Activated CD4-positive, alpha-beta T cell treated with anti-CD3 and anti-CD28 coated beads for 36 hours (primary cell): ENCODE measurements at regions of chr13 and their contacts with region 1.

Region 1: GRCh38 chr13:106548064-106548696 is 12.7 kb upstream of the EFNB2 start:
- DNase-seq: no peak
- ATAC-seq: no peak
- H3K4me3 Mint-ChIP-seq: no peak overlapping the region
- H3K27ac Mint-ChIP-seq: no peak overlapping the region
- H3K4me1 Mint-ChIP-seq: peaks cover 14% of the 10 kb centered on the region
- H3K27me3 Mint-ChIP-seq: no peaks in the 10 kb centered on the region

Region 2: GRCh38 chr13:105139380-105140285 is 1408.5 kb before region 1 on chr13:
- CTCF ChIA-PET with region 1: no interaction called
- POLR2A ChIA-PET with region 1: interaction called, 3 read pairs
- intact Hi-C with region 1: loop called in 1 of 2 experiments (anchors 5 kb)
- DNase-seq: peak; percentile 75
- ATAC-seq: peak; percentile 91
- H3K4me3 Mint-ChIP-seq: peak overlapping the region; percentile 73
- H3K27ac Mint-ChIP-seq: peak overlapping the region; percentile 93
- H3K4me1 Mint-ChIP-seq: peaks cover 17% of the 10 kb centered on the region
- H3K27me3 Mint-ChIP-seq: no peaks in the 10 kb centered on the region

Region 3: GRCh38 chr13:106373989-106374572 is 174.1 kb before region 1 on chr13:
- CTCF ChIA-PET with region 1: no interaction called
- POLR2A ChIA-PET with region 1: no interaction called
- intact Hi-C with region 1: no loop called
- DNase-seq: peak; percentile 38
- ATAC-seq: peak; percentile 82
- H3K4me3 Mint-ChIP-seq: no peak overlapping the region
- H3K27ac Mint-ChIP-seq: no peak overlapping the region
- H3K4me1 Mint-ChIP-seq: no peaks in the 10 kb centered on the region
- H3K27me3 Mint-ChIP-seq: peaks cover 13% of the 10 kb centered on the region

Region 4: DNA sequence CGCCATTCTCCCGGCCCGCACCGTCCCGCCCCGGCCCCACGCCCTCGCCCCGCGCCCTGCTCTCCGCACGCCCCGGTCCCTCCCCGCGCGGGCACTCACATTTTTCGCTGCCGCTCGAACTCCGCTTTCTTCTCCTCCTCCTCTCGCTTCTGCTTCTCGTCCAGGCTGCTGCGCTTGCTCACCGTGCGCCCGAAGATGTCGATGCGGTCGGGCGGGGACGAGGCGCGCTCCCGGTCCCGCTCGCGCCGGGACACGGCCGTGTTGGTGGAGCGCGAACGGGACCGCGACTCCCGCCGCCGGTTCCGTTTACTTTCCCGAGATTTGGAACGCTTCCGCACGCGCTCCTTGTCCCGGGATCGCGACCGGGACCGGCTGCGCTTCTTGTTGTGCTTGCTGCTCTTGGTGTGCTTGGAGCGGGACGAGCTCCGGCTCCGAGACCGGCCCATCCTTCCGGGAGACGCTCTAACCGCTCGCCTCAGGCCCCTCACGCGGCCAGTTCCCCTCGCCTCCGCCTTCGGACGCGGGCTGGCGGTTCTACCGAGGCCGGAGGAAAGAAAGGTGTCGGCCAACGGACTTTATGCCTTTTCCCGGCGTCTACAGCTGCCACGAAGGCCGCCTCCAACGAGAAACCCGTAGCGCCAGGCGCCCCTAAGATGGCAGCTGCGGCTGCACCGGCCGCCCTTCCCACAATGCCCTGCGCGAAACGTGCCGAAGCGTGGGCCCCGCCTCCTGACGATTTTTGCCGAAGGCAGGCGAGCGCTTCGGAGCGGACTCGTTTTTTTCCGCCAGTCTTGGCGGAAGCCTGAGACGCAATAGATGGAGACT is 19.5 kb after region 1 on chr13 and contains the start of gene ARGLU1:
- CTCF ChIA-PET with region 1: interaction called, 3 read pairs
- POLR2A ChIA-PET with region 1: no interaction called
- intact Hi-C with region 1: loop called in 1 of 2 experiments (anchors 1 kb)
- DNase-seq: peak; percentile 97
- ATAC-seq: peak; percentile 88
- H3K4me3 Mint-ChIP-seq: peak within 1 kb of the TSS; percentile 97
- H3K27ac Mint-ChIP-seq: peak within 1 kb of the TSS; percentile 92
- H3K4me1 Mint-ChIP-seq: peaks cover 39% of the 10 kb centered on the region
- H3K27me3 Mint-ChIP-seq: no peaks in the 10 kb centered on the region
- total RNA-seq, gene ARGLU1: 68.8 to 94.2 TPM